ENCODE measurements at regions of chr2 and their contacts with region 1.

Region 1: GRCh38 chr2:41853427-41854216 is 194.2 kb upstream of the PKDCC start:
- DNase-seq: peak; percentile 26 to 53 (median 36)
- ATAC-seq: peak; percentile 38; the same call in 2 of the 3 replicates
- H3K4me3 ChIP-seq: no peak overlapping the region
- H3K27ac ChIP-seq: no peak overlapping the region
- H3K4me1 ChIP-seq: no peaks in the 10 kb centered on the region
- H3K27me3 ChIP-seq: no peaks in the 10 kb centered on the region
- CTCF ChIP-seq: peak; percentile 57 to 72 (median 71); a peak in 5 of 6 replicates
- EP300 ChIP-seq: no peak
- POLR2A ChIP-seq: no peak
- RAD21 ChIP-seq: peak; percentile 70 to 85

Region 2: GRCh38 chr2:42086500-42086953 is 232.9 kb after region 1 on chr2:
- CTCF ChIA-PET with region 1: interaction called, 23 read pairs
- POLR2A ChIA-PET with region 1: no interaction called
- in situ Hi-C with region 1: no loop called
- intact Hi-C with region 1: loop called (anchors 1 kb)
- DNase-seq: peak; percentile 44 to 59 (median 52)
- ATAC-seq: peak; percentile 70
- H3K4me3 ChIP-seq: no peak overlapping the region
- H3K27ac ChIP-seq: no peak overlapping the region
- H3K4me1 ChIP-seq: peaks cover 0 to 3% of the 10 kb centered on the region in 2 experiments; a peak in 1 of 5 replicates
- H3K27me3 ChIP-seq: peaks cover 2 to 9% of the 10 kb centered on the region in 2 experiments; a peak in 3 of 5 replicates
- CTCF ChIP-seq: peak; percentile 59 to 78 (median 71)
- EP300 ChIP-seq: no peak
- POLR2A ChIP-seq: no peak
- RAD21 ChIP-seq: peak; percentile 94 to 95

Region 3: DNA sequence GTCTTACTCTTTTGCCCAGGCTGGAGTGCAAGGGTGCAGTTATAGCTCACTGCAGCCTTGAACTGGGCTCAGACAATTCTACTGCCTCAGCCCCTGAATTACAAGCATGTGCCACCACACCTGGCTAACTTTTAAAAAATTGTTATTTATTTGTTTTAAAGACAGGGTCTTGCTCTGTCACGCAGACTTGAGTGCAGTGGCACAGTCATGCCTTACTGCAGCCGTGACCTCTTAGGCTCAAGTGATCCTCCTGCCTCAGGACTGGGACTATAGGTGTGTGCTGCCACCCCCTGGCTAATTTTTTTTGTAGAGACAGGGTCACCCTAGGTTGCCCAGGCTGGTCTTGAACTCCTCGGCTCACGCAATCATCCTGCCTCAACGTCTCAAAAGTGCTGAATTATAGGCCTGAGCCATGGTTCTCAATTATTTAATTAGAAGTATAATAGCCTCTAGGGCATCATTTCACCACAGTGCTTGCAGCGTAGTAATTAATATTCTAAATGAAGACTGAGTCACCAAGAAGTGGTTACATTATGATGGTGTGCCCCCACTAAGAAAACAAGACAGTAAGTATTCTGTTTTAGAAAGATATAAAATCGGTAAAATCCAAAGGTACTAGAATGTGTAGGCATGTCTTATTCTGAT is 385.1 kb after region 1 on chr2:
- CTCF ChIA-PET with region 1: interaction called, 3 read pairs
- POLR2A ChIA-PET with region 1: no interaction called
- in situ Hi-C with region 1: no loop called
- intact Hi-C with region 1: loop called (anchors 5 kb)
- DNase-seq: peak in 1 of 4 experiments; percentile 68
- ATAC-seq: peak; percentile 99
- H3K4me3 ChIP-seq: no peak overlapping the region
- H3K27ac ChIP-seq: no peak overlapping the region
- H3K4me1 ChIP-seq: peaks cover 0 to 8% of the 10 kb centered on the region in 2 experiments; a peak in 2 of 5 replicates
- H3K27me3 ChIP-seq: no peaks in the 10 kb centered on the region
- CTCF ChIP-seq: peak; percentile 60 to 72 (median 66)
- EP300 ChIP-seq: no peak
- POLR2A ChIP-seq: no peak
- RAD21 ChIP-seq: peak; percentile 81 to 87

Measured in K562 (cell line).